Activated naive CD4-positive, alpha-beta T cell treated with anti-CD3 and anti-CD28 coated beads, Interleukin-2, amount 10 ng/mL, durations not matched to agents 7 days and 5 days (primary cell): ENCODE measurements at regions of chr17 and their contacts with region 1.

Region 1: GRCh38 chr17:58587702-58588254 is 73.3 kb upstream of the MTMR4 start:
- DNase-seq: peak; percentile 70
- H3K4me3 Mint-ChIP-seq: no peak overlapping the region
- H3K27ac Mint-ChIP-seq: no peak overlapping the region
- H3K4me1 Mint-ChIP-seq: peaks cover 4% of the 10 kb centered on the region
- H3K27me3 Mint-ChIP-seq: peaks cover 10% of the 10 kb centered on the region

Region 2: GRCh38 chr17:58517734-58518609 is 69.8 kb before region 1 on chr17:
- CTCF ChIA-PET with region 1: interaction called, 11 read pairs
- DNase-seq: peak; percentile 100
- H3K4me3 Mint-ChIP-seq: peak overlapping the region; percentile 86
- H3K27ac Mint-ChIP-seq: peak overlapping the region; percentile 95
- H3K4me1 Mint-ChIP-seq: peaks cover 53% of the 10 kb centered on the region
- H3K27me3 Mint-ChIP-seq: peaks cover 10% of the 10 kb centered on the region

Region 3: GRCh38 chr17:58534901-58535421 is 52.8 kb before region 1 on chr17:
- CTCF ChIA-PET with region 1: no interaction called
- DNase-seq: no peak
- H3K4me3 Mint-ChIP-seq: no peak overlapping the region
- H3K27ac Mint-ChIP-seq: no peak overlapping the region
- H3K4me1 Mint-ChIP-seq: peaks cover 4% of the 10 kb centered on the region
- H3K27me3 Mint-ChIP-seq: peaks cover 84% of the 10 kb centered on the region

Region 4: DNA sequence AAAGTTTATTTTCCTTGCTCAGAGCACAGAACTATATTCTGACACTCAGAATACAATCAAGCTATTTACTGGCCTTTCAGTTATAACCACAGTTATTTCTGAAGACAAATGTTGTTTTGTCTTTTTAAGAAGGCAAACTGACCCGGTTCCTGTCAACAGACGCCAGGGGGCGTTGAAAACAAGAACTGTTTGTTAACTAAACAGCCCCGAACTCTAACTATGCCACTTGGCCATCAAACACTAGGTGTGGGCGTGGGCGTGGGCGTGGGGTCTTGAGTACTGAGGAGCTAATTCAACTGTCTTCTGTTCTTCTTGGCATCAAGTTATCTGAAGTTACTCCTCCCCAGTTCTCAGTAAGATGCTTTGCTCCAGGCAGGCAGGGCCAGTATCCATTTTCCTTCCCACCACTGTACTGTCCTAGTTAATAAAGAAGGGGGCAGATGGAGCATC is 10.1 kb before region 1 on chr17:
- CTCF ChIA-PET with region 1: interaction called, 14 read pairs
- DNase-seq: peak; percentile 60
- H3K4me3 Mint-ChIP-seq: no peak overlapping the region
- H3K27ac Mint-ChIP-seq: no peak overlapping the region
- H3K4me1 Mint-ChIP-seq: peaks cover 4% of the 10 kb centered on the region
- H3K27me3 Mint-ChIP-seq: peaks cover 5% of the 10 kb centered on the region